ENCODE measurements at regions of chr15 and their contacts with region 1.

Region 1: DNA sequence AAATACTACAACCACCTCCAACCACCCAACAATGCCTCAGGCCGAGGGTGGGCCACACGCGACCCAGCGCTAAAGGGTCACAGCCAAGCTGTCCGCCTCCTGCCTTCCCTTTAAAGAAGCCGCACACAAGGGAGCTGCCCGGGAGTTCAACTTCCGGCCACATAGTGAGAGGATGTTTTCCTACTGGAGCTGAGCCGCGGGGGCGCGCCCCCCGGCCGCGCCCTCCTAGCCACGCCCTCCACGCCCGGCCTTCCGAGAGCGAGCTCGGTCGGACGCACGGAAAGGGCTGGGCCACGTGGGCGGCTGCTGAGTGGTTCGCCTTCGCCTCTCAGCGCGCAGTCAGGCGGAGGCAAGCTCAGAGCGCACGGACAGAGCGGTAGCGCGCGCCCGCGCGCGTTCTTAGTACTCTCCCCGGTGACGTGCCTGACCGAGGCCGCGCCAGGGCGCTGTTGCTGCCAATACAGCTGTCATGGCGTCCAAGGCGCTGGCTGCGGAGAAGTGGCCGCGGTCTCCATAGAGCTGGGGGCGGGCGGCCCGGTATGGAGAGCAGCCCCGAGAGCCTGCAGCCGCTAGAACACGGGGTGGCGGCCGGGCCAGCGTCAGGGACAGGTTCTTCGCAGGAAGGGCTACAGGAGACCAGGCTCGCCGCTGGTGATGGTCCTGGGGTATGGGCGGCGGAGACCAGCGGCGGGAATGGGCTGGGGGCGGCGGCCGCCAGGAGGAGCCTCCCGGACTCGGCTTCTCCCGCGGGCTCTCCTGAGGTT is at the start of gene MINDY2:
- DNase-seq: peak; percentile 98
- H3K4me3 Mint-ChIP-seq: no peak within 1 kb of the TSS
- H3K27ac Mint-ChIP-seq: peak within 1 kb of the TSS; percentile 97
- H3K4me1 Mint-ChIP-seq: peaks cover 11% of the 10 kb centered on the region
- H3K27me3 Mint-ChIP-seq: no peaks in the 10 kb centered on the region
- CTCF ChIP-seq: peak; percentile 28
- total RNA-seq, gene MINDY2: 18.8 and 21.9 TPM in 2 replicates

Region 2: GRCh38 chr15:57686657-57687056 is 1084.4 kb before region 1 on chr15:
- CTCF ChIA-PET with region 1: no interaction called
- POLR2A ChIA-PET with region 1: no interaction called
- intact Hi-C with region 1: no loop called
- DNase-seq: no peak
- H3K4me3 Mint-ChIP-seq: no peak overlapping the region
- H3K27ac Mint-ChIP-seq: no peak overlapping the region
- H3K4me1 Mint-ChIP-seq: peaks cover 9% of the 10 kb centered on the region
- H3K27me3 Mint-ChIP-seq: no peaks in the 10 kb centered on the region
- CTCF ChIP-seq: no peak

Region 3: GRCh38 chr15:58331903-58332675 is 438.9 kb before region 1 on chr15:
- CTCF ChIA-PET with region 1: no interaction called
- POLR2A ChIA-PET with region 1: interaction called, 14 read pairs
- intact Hi-C with region 1: no loop called
- DNase-seq: peak; percentile 98
- H3K4me3 Mint-ChIP-seq: peak overlapping the region; percentile 6
- H3K27ac Mint-ChIP-seq: peak overlapping the region; percentile 96
- H3K4me1 Mint-ChIP-seq: peaks cover 32% of the 10 kb centered on the region
- H3K27me3 Mint-ChIP-seq: no peaks in the 10 kb centered on the region
- CTCF ChIP-seq: no peak

Region 4: GRCh38 chr15:58749532-58750337 is 21.3 kb before region 1 on chr15 and contains the start of gene ADAM10:
- CTCF ChIA-PET with region 1: interaction called, 20 read pairs
- POLR2A ChIA-PET with region 1: interaction called, 368 read pairs
- intact Hi-C with region 1: loop called (anchors 1 kb)
- DNase-seq: peak; percentile 99
- H3K4me3 Mint-ChIP-seq: peak within 1 kb of the TSS; percentile 96
- H3K27ac Mint-ChIP-seq: peak within 1 kb of the TSS; percentile 90
- H3K4me1 Mint-ChIP-seq: peaks cover 24% of the 10 kb centered on the region
- H3K27me3 Mint-ChIP-seq: no peaks in the 10 kb centered on the region
- CTCF ChIP-seq: no peak
- total RNA-seq, gene ADAM10: 87.5 and 109 TPM in 2 replicates

Region 5: DNA sequence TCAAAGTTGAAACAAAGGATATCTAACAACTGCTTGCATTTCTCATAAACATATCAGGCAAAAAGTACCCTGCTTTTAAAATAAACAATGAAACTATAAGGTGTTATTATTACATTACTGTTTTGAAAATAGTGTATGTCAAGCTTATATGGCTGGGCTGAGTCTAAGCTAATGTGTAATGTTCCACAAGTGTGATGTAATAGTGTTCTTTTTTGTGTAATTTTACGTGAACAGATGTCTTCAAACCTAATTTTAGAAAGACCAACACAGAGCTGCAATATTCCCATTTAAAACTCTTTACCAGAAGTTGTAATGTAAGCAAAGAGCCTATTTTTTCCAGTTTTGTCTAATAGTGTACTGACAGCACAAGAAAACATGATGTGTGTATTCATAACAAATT is 34.1 kb after region 1 on chr15:
- CTCF ChIA-PET with region 1: interaction called, 4 read pairs
- POLR2A ChIA-PET with region 1: interaction called, 10 read pairs
- intact Hi-C with region 1: no loop called
- DNase-seq: peak; percentile 4
- H3K4me3 Mint-ChIP-seq: no peak overlapping the region
- H3K27ac Mint-ChIP-seq: peak overlapping the region; percentile 32
- H3K4me1 Mint-ChIP-seq: peaks cover 8% of the 10 kb centered on the region
- H3K27me3 Mint-ChIP-seq: no peaks in the 10 kb centered on the region
- CTCF ChIP-seq: no peak

Region 6: DNA sequence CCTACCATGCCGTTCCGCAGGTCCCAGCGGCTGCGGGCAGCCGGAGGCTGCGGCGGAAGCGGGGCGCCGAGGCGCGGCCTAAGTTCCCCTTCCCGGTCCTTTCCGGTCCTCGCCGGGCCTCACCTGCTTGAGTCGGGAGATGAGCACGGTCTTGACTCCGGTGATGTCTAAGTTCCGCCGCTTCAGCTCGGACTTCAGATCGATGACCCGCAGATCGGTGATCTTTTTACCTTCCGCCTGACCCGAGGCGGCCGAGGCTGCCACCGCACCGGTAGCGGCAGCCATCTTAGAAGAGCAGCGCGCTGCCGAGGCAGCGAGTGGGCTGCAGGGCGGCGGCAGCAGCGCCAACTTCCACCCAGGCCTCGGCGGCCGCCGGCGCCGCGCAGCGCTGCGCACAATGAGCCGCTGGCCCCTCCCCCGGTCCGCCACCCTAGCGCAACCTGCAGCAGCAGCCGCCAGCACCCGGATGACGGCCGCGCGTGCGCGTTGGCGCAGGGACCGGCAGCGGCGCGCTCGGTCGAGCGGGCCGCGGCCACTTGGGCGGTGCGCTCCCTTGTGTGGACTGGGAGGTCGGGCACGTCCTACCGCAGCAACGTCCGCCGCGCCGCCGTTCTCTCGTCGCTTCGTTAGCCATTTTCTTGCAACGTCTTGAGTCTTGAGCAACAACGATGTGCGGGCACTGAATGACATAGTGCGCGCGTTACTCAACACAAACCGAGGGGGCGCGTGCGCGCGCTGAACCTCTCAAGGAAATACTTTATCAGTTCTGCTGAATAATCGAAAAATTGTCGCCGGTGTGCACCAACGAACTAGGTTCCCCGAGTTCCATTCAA is 162.5 kb after region 1 on chr15 and contains the start of gene SLTM:
- CTCF ChIA-PET with region 1: interaction called, 5 read pairs
- POLR2A ChIA-PET with region 1: interaction called, 49 read pairs
- intact Hi-C with region 1: loop called (anchors 5 kb)
- DNase-seq: peak; percentile 91
- H3K4me3 Mint-ChIP-seq: peak within 1 kb of the TSS; percentile 92
- H3K27ac Mint-ChIP-seq: peak within 1 kb of the TSS; percentile 99
- H3K4me1 Mint-ChIP-seq: peaks cover 11% of the 10 kb centered on the region
- H3K27me3 Mint-ChIP-seq: no peaks in the 10 kb centered on the region
- CTCF ChIP-seq: no peak
- total RNA-seq, gene SLTM: 108 and 117 TPM in 2 replicates